ENCODE measurements at regions of chr16 and their contacts with region 1.

Region 1: DNA sequence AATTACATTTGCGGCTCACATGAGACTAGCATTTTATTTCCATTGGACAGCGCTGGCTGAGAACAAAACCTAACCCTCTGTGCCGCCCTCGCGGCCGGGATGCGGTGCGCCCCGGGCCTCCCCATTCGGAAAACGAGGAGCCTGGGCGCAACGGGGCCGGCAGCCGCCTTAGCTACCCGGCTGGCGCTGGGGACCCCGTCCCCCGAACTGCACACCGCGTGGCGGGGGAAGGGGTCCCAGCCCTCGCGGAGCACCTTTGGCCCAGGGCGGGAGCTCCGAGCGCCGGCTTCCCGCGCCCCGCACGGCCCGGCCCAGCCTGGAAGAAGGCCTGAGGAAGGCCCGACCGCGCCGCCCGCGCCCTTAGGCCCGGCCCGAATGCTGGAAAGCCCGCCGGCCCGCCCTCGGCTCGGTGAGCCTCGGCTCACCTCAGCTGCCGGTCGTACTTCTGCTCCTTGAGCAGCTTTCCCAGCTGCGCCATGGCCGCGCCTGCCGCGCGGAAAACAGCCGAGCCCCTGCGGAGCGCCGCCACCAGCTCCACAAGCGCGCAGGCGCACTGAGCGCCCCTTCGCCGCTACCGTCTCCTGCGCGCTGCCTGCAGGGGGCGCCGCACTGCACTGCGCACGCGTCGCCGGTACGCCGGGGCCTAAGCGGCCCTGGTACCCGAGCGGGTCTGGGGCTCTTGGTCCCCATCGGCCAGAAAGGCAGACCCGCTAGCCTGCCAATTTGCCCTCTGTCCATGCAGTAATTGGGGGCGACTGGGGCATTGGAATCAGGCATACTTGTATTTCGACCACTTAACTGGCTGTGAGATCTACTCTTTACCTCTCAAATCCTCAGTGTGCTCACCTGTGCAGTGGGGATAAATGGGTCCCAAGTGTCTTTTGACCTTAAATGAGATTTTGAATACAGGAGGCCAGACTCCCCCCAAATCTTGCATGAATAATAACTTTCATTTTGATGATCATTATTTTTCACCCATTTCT is at the start of gene NAE1:
- DNase-seq: peak; percentile 90
- H3K4me3 Mint-ChIP-seq: peak within 1 kb of the TSS; percentile 73
- H3K27ac Mint-ChIP-seq: peak within 1 kb of the TSS; percentile 63
- H3K4me1 Mint-ChIP-seq: peaks cover 41% of the 10 kb centered on the region
- H3K27me3 Mint-ChIP-seq: no peaks in the 10 kb centered on the region
- total RNA-seq, gene NAE1: 76.5 to 78.2 TPM

Region 2: GRCh38 chr16:66728117-66728787 is 102.5 kb before region 1 on chr16:
- CTCF ChIA-PET with region 1: interaction called, 14 read pairs
- POLR2A ChIA-PET with region 1: interaction called, 3 read pairs
- DNase-seq: no peak
- H3K4me3 Mint-ChIP-seq: no peak overlapping the region
- H3K27ac Mint-ChIP-seq: no peak overlapping the region
- H3K4me1 Mint-ChIP-seq: peaks cover 2% of the 10 kb centered on the region
- H3K27me3 Mint-ChIP-seq: no peaks in the 10 kb centered on the region

Region 3: GRCh38 chr16:66758086-66758485 is 72.6 kb before region 1 on chr16:
- CTCF ChIA-PET with region 1: interaction called, 17 read pairs
- POLR2A ChIA-PET with region 1: no interaction called
- DNase-seq: no peak
- H3K4me3 Mint-ChIP-seq: no peak overlapping the region
- H3K27ac Mint-ChIP-seq: no peak overlapping the region
- H3K4me1 Mint-ChIP-seq: no peaks in the 10 kb centered on the region
- H3K27me3 Mint-ChIP-seq: peaks cover 8% of the 10 kb centered on the region

Region 4: GRCh38 chr16:66844342-66845079 is 13.8 kb after region 1 on chr16 and contains the start of gene CA7:
- CTCF ChIA-PET with region 1: interaction called, 28 read pairs
- POLR2A ChIA-PET with region 1: interaction called, 17 read pairs
- DNase-seq: no peak
- H3K4me3 Mint-ChIP-seq: no peak within 1 kb of the TSS
- H3K27ac Mint-ChIP-seq: no peak within 1 kb of the TSS
- H3K4me1 Mint-ChIP-seq: peaks cover 20% of the 10 kb centered on the region
- H3K27me3 Mint-ChIP-seq: peaks cover 41% of the 10 kb centered on the region
- total RNA-seq, gene CA7: 0.13 TPM in 1 of 2 experiments, not detected in the other

Region 5: GRCh38 chr16:66862023-66862520 is 31.4 kb after region 1 on chr16:
- CTCF ChIA-PET with region 1: interaction called, 125 read pairs
- POLR2A ChIA-PET with region 1: interaction called, 27 read pairs
- DNase-seq: no peak
- H3K4me3 Mint-ChIP-seq: no peak overlapping the region
- H3K27ac Mint-ChIP-seq: no peak overlapping the region
- H3K4me1 Mint-ChIP-seq: no peaks in the 10 kb centered on the region
- H3K27me3 Mint-ChIP-seq: no peaks in the 10 kb centered on the region

Region 6: GRCh38 chr16:66880288-66881013 is 49.7 kb after region 1 on chr16 and contains the start of gene PDP2:
- CTCF ChIA-PET with region 1: interaction called, 35 read pairs
- POLR2A ChIA-PET with region 1: interaction called, 37 read pairs
- DNase-seq: peak; percentile 93
- H3K4me3 Mint-ChIP-seq: peak within 1 kb of the TSS; percentile 98
- H3K27ac Mint-ChIP-seq: peak within 1 kb of the TSS; percentile 89
- H3K4me1 Mint-ChIP-seq: peaks cover 54% of the 10 kb centered on the region
- H3K27me3 Mint-ChIP-seq: no peaks in the 10 kb centered on the region
- total RNA-seq, gene PDP2: 30.7 to 33.9 TPM

Region 7: GRCh38 chr16:66928702-66929388 is 98.1 kb after region 1 on chr16:
- CTCF ChIA-PET with region 1: interaction called, 19 read pairs
- POLR2A ChIA-PET with region 1: interaction called, 4 read pairs
- DNase-seq: peak; percentile 64
- H3K4me3 Mint-ChIP-seq: no peak overlapping the region
- H3K27ac Mint-ChIP-seq: no peak overlapping the region
- H3K4me1 Mint-ChIP-seq: peaks cover 44% of the 10 kb centered on the region
- H3K27me3 Mint-ChIP-seq: peaks cover 18% of the 10 kb centered on the region

Measured in activated CD4-positive, alpha-beta memory T cell treated with anti-CD3 and anti-CD28 coated beads, Interleukin-2, amount 10 ng/mL, durations not matched to agents 7 days and 5 days (primary cell).